CD4-positive, alpha-beta memory T cell (primary cell): ENCODE measurements at regions of chr3 and their contacts with region 1.

Region 1: DNA sequence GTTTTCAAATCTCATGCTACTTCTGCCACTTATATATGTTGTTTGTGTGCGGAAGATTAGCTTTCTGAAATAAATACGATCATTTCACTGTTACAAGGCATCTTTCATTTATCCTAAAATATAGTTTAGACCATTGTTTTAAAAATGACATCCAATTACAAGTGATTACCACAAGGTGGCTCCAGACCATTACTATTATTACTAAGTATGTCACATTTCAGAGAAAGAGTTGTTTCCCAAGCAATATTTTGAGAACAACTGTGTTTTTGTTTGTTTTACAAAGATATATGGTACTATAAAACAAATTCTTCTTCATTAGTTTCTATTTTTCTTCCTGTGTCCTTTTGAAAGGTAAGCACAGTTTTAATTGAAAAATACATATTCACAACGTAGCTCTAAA is 136.0 kb upstream of the RAP2B start:
- DNase-seq: peak in 4 of 5 donors; percentile 22 to 29 (median 26)
- H3K4me3 ChIP-seq: no peak overlapping the region
- H3K4me3 Mint-ChIP-seq: no peak overlapping the region
- H3K27ac ChIP-seq: no peak overlapping the region
- H3K27ac Mint-ChIP-seq: no peak overlapping the region
- H3K4me1 ChIP-seq: no peaks in the 10 kb centered on the region
- H3K4me1 Mint-ChIP-seq: no peaks in the 10 kb centered on the region
- H3K27me3 ChIP-seq: no peaks in the 10 kb centered on the region
- H3K27me3 Mint-ChIP-seq: peaks cover 2 to 11% of the 10 kb centered on the region in 2 donors

Region 2: GRCh38 chr3:153456831-153457545 is 431.0 kb after region 1 on chr3:
- CTCF ChIA-PET with region 1: no interaction called
- POLR2A ChIA-PET with region 1: no interaction called
- intact Hi-C with region 1: no loop called
- DNase-seq: no peak
- H3K4me3 ChIP-seq: no peak overlapping the region
- H3K4me3 Mint-ChIP-seq: no peak overlapping the region
- H3K27ac ChIP-seq: no peak overlapping the region
- H3K27ac Mint-ChIP-seq: no peak overlapping the region
- H3K4me1 ChIP-seq: peaks cover 11% of the 10 kb centered on the region
- H3K4me1 Mint-ChIP-seq: peaks cover 12 to 20% (median 15%) of the 10 kb centered on the region in 4 donors
- H3K27me3 ChIP-seq: no peaks in the 10 kb centered on the region
- H3K27me3 Mint-ChIP-seq: no peaks in the 10 kb centered on the region

Region 3: DNA sequence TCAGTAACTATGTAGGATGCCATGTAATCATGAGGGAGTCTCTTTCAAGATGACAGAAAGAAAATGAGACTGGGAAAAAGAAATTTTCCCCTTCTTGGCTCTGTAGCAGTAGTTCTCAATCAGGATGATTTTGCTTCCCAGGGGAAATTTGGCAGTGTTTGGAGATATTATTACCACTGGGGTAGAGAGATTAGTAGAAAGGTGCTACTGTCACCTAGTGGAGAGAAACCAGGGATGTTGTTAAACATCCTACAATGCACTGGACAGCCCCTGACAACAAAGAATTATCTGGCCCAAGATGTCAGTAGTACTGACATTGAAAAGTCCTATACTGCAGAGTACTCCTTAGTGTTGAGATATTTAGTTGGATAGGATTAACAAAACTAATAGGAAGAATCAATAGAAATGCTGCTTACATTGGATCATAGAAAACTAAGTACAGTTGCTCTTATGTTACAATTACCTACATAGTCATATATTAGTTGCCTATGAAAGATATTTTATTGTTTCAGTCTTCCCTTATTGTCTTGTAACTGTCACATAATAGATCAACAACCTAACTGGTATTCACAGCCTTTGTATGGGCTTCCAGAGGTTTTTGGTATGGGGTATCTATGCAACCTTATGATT is 569.3 kb after region 1 on chr3:
- CTCF ChIA-PET with region 1: interaction called, 3 read pairs
- POLR2A ChIA-PET with region 1: no interaction called
- intact Hi-C with region 1: loop called (anchors 1 kb)
- DNase-seq: peak in 4 of 5 donors; percentile 13 to 24 (median 16)
- H3K4me3 ChIP-seq: no peak overlapping the region
- H3K4me3 Mint-ChIP-seq: no peak overlapping the region
- H3K27ac ChIP-seq: no peak overlapping the region
- H3K27ac Mint-ChIP-seq: peak overlapping the region in 1 of 7 donors; percentile 34
- H3K4me1 ChIP-seq: no peaks in the 10 kb centered on the region
- H3K4me1 Mint-ChIP-seq: peaks cover 0 to 6% (median 5%) of the 10 kb centered on the region in 4 donors
- H3K27me3 ChIP-seq: no peaks in the 10 kb centered on the region
- H3K27me3 Mint-ChIP-seq: no peaks in the 10 kb centered on the region

Region 4: DNA sequence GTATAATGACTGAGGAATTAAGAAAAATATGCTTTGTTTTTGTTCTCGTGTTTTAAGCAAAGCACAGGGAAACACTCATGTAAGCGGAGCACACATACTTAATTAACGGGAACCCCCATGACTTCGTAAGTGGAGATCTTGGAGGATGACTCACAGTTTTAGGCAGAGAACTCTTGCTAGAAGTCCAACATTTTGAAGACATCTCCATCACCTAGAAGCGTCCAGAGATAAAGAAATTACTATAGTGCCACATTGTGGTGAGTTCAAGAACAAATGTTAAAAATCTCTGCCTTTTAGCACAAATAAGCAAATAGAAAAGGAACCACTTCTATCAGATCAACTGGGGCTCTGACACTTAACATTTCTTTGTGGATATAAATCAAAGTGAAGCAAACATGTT is 901.1 kb after region 1 on chr3:
- CTCF ChIA-PET with region 1: no interaction called
- POLR2A ChIA-PET with region 1: no interaction called
- intact Hi-C with region 1: loop called (anchors 1 kb)
- DNase-seq: no peak
- H3K4me3 ChIP-seq: no peak overlapping the region
- H3K4me3 Mint-ChIP-seq: no peak overlapping the region
- H3K27ac ChIP-seq: no peak overlapping the region
- H3K27ac Mint-ChIP-seq: no peak overlapping the region
- H3K4me1 ChIP-seq: no peaks in the 10 kb centered on the region
- H3K4me1 Mint-ChIP-seq: no peaks in the 10 kb centered on the region
- H3K27me3 ChIP-seq: no peaks in the 10 kb centered on the region
- H3K27me3 Mint-ChIP-seq: peaks cover 4 to 13% of the 10 kb centered on the region in 2 donors

Region 5: DNA sequence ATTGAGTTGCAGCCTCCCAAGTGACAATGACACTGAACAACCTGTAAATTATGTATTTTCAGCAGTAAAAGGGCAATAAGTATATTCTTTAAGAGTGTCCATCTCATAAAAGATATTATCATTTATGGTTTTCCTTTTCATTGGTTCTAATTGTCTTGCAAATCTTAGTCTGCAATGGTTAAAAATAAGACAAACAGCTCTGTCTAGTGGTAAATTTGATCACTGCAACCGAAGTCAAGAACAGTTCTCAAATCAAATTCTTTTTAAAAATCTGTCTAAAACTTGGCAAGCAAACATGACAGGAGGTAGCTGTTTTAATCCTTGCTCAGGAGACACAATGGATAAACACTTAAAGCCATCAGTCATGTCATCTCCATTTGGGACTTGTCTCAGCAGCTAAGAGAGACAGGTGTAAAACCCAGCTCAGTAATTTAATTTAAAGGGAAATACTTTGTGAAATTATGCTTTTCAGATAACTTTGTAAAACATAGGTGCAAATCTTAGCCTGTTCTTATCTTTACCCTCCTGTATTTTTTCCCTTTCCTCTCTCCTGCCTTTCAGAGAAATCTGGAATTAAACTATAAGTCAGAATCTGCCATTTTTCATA is 944.8 kb after region 1 on chr3:
- CTCF ChIA-PET with region 1: no interaction called
- POLR2A ChIA-PET with region 1: no interaction called
- intact Hi-C with region 1: loop called (anchors 1 kb)
- DNase-seq: no peak
- H3K4me3 ChIP-seq: no peak overlapping the region
- H3K4me3 Mint-ChIP-seq: no peak overlapping the region
- H3K27ac ChIP-seq: no peak overlapping the region
- H3K27ac Mint-ChIP-seq: no peak overlapping the region
- H3K4me1 ChIP-seq: no peaks in the 10 kb centered on the region
- H3K4me1 Mint-ChIP-seq: no peaks in the 10 kb centered on the region
- H3K27me3 ChIP-seq: no peaks in the 10 kb centered on the region
- H3K27me3 Mint-ChIP-seq: peaks cover 5 to 6% of the 10 kb centered on the region in 2 donors

Region 6: DNA sequence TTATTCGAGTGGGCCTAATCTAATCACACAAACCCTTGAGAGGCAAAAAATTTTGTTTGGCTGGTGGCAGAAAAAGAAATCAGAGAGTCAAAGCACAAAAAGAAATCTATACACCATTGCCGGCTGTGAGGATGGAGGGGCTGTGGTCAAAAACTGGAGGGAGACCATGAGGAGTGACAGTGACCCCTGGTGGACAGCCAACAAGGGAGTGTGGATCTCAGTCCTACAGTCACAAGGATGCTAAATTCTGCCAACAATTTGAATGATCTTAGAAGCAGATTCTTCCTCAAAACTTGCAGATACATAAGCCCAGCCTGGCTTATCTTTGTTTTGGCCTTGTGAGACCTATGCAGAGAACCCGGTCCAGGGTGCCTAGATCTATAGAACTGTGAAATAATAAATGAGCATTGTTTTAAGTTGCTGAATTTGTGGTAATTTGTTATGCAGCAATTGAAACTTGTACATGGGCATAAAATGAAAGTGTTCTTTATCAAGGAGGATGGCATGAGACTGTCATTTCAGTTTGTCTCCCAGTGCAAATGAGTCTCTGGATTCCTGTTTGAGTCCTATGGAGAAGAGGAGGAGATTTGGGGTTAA is 992.2 kb after region 1 on chr3:
- CTCF ChIA-PET with region 1: interaction called, 3 read pairs
- POLR2A ChIA-PET with region 1: no interaction called
- intact Hi-C with region 1: loop called (anchors 1 kb)
- DNase-seq: peak in 4 of 5 donors; percentile 4 to 12 (median 12)
- H3K4me3 ChIP-seq: no peak overlapping the region
- H3K4me3 Mint-ChIP-seq: no peak overlapping the region
- H3K27ac ChIP-seq: no peak overlapping the region
- H3K27ac Mint-ChIP-seq: no peak overlapping the region
- H3K4me1 ChIP-seq: no peaks in the 10 kb centered on the region
- H3K4me1 Mint-ChIP-seq: no peaks in the 10 kb centered on the region
- H3K27me3 ChIP-seq: peaks cover 5% of the 10 kb centered on the region
- H3K27me3 Mint-ChIP-seq: peaks cover 1 to 2% of the 10 kb centered on the region in 2 donors